Heart left ventricle (tissue), 16 donors: ENCODE measurements at regions of chr17 and their contacts with region 1.

Region 1: GRCh38 chr17:43634591-43635125 is 27.1 kb downstream of the MEOX1 start:
- DNase-seq: peak; percentile 58 to 83 (median 75)
- ATAC-seq: peak; percentile 43 to 86 (median 80)
- H3K4me3 ChIP-seq: no peak overlapping the region
- H3K27ac ChIP-seq: peak overlapping the region; percentile 11 to 80 (median 52)
- H3K4me1 ChIP-seq: peaks cover 0 to 21% (median 11%) of the 10 kb centered on the region in 12 donors
- H3K27me3 ChIP-seq: no peaks in the 10 kb centered on the region
- CTCF ChIP-seq: no peak
- POLR2A ChIP-seq: no peak

Region 2: DNA sequence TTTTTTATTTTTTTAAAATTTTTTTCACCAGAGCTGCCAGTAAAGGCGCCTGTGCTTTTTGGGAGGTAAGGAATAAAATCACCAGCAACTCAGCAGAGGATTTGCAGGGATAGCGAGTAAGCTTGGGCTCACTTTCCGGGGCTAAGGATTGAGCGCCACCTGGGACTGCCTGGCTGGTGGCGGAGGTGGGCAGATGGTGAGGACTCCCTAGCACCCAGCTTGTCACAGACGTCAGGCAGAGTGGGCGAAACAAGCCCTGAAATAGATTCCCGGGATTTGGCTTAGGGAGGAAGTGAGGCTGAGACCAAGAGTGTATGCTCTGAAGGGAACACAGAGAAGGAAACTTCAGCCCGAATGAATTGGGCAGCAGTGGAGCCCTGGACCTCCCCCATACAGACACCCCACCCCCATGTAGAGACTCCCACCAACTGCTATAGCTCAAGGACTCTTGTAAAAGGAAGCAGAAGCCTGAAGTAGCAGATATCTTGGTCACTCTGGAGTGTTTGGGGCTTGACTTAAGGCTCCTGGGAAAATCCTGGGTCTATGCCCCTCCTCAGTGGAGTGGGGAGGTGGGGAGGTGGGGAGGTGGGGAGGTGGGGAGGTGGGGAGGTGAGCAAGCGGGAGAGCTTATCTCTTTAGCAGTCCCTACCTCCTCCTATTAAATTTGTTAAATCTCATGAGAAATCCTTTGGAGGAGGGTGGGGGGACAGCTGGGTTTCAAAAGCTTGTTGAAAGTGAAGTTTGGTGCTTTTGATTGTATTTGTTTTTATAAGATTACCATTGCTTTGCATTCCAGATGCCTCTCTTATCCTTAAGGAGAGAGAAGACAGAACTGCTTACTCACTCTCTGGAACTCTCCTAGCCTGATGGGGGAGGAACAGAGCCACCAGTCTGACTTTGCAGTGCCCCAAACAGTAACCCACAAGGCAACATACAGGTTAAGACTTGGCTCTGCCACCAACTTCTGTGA is 227.7 kb before region 1 on chr17:
- intact Hi-C with region 1: no loop called
- DNase-seq: no peak
- ATAC-seq: peak in 2 of 4 donors; percentile 10 to 35
- H3K4me3 ChIP-seq: no peak overlapping the region
- H3K27ac ChIP-seq: peak overlapping the region in 1 of 12 donors; percentile 63
- H3K4me1 ChIP-seq: peaks cover 0 to 28% (median 10%) of the 10 kb centered on the region in 12 donors
- H3K27me3 ChIP-seq: no peaks in the 10 kb centered on the region
- CTCF ChIP-seq: no peak
- POLR2A ChIP-seq: no peak

Region 3: DNA sequence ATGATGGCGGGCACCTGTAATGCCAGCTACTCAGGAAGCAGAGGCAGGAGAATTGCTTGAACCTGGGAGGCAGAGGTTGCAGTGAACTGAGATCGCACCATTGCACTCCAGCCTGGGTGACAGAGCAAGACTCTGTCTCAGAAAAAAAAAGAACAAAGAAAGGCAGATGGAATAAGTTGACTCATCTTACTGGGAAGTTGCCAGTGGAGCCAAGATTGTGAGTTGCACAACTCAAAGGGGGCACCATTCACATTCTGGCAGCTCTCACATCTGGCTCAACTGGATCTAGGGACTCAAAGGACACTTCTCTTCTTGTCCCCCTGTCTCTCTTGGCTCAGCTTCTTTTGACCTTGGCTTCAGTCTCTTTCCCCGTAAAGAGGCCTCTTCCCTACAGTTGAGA is 34.8 kb before region 1 on chr17:
- intact Hi-C with region 1: loop called in 1 of 10 experiments (anchors 5 kb)
- DNase-seq: no peak
- ATAC-seq: peak in 1 of 4 donors; percentile 22
- H3K4me3 ChIP-seq: no peak overlapping the region
- H3K27ac ChIP-seq: no peak overlapping the region
- H3K4me1 ChIP-seq: peaks cover 0 to 23% (median 6%) of the 10 kb centered on the region in 12 donors
- H3K27me3 ChIP-seq: no peaks in the 10 kb centered on the region
- CTCF ChIP-seq: no peak
- POLR2A ChIP-seq: no peak